ENCODE measurements at regions of chr13 and their contacts with region 1.

Region 1: GRCh38 chr13:42594970-42595571 is 21.1 kb downstream of the TNFSF11 start:
- DNase-seq: peak; percentile 54
- H3K4me3 ChIP-seq: no peak overlapping the region
- H3K27ac ChIP-seq: no peak overlapping the region
- H3K27me3 ChIP-seq: peaks cover 4% of the 10 kb centered on the region
- CTCF ChIP-seq: peak; percentile 80

Region 2: DNA sequence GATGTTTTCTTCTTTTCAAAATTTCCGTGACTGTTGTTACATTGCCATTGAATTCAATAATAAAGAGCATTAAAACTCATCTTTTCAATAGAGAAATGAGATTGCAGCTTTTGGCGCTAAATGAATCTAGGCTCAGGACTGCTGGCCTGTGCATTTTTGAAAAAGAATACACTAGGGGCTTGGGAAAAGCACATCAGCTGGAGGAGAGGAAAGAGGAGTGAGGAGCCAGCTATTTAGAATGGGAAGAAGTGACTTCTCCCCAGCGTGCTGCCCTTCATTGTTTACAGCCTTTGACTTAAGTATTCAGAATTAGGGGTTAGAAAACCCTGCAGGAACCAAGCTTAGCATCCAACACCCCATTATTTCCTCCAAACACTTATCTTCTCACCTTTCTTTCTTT is 22.1 kb after region 1 on chr13:
- CTCF ChIA-PET with region 1: interaction called, 10 read pairs
- POLR2A ChIA-PET with region 1: no interaction called
- DNase-seq: no peak
- H3K4me3 ChIP-seq: no peak overlapping the region
- H3K27ac ChIP-seq: no peak overlapping the region
- H3K27me3 ChIP-seq: peaks cover 18% of the 10 kb centered on the region
- CTCF ChIP-seq: no peak

Region 3: GRCh38 chr13:42747399-42747873 is 152.4 kb after region 1 on chr13:
- CTCF ChIA-PET with region 1: no interaction called
- POLR2A ChIA-PET with region 1: no interaction called
- DNase-seq: peak; percentile 94
- H3K4me3 ChIP-seq: no peak overlapping the region
- H3K27ac ChIP-seq: peak overlapping the region; percentile 71
- H3K27me3 ChIP-seq: no peaks in the 10 kb centered on the region
- CTCF ChIP-seq: no peak

Region 4: DNA sequence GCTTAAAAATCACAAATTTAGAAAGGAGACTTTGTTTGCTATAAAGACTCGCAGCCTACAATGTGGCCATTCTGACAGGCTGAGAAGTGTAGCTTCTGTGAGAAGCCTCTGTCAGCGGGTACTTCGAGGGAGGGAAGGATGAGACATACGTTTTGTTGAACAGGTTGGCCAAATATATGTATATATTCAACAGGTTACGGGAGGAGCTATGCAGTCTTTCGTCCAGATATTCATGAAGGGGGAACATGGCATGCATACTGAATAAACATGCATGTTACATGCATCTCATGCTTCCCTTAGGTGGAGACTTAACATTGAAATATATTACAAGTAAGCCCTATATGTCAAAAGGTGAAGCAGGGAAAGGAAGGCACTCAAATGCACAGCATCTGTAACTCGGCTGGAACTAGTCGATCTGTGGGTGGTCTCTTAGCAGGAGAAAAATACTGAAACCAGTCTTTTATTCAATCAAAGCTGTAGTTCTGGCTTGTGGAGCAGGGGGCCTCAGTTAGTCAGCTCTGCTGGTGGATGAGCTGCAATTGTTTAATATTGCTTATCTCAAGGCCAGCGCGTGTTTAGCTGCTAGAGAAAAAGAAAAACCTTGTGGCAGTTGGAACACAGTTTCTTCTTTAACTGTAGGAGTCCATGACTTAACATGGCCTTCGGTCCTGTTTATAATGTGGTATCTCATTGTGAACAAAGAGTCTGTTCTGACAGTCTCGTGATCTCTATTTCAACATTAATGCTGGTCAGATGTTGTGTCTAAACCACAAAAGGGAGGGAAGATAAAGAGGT is 280.6 kb after region 1 on chr13:
- CTCF ChIA-PET with region 1: interaction called, 13 read pairs
- POLR2A ChIA-PET with region 1: no interaction called
- DNase-seq: no peak
- H3K4me3 ChIP-seq: no peak overlapping the region
- H3K27ac ChIP-seq: no peak overlapping the region
- H3K27me3 ChIP-seq: no peaks in the 10 kb centered on the region
- CTCF ChIP-seq: peak; percentile 58

Region 5: DNA sequence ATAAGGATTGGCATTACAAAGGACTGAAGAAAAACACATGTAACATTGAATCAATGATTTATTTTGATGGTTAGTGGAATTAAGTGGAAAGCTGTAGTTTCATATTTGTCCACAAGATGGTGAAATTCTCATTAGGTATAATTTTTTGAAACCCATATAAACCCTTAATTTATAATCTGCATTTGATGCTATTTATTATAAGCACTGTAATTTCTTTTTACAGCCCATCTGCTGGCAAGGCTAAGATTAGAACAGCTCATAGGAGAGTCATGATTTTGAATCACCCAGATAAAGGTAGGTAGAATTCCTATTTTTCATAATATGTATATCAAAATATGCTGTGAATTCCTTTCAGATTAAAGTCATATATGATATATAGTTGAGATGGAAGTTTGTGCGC is 490.5 kb after region 1 on chr13:
- CTCF ChIA-PET with region 1: interaction called, 10 read pairs
- POLR2A ChIA-PET with region 1: no interaction called
- DNase-seq: no peak
- H3K4me3 ChIP-seq: no peak overlapping the region
- H3K27ac ChIP-seq: no peak overlapping the region
- H3K27me3 ChIP-seq: no peaks in the 10 kb centered on the region
- CTCF ChIP-seq: peak; percentile 59